ENCODE measurements at regions of chr1 and their contacts with region 1.

Region 1: DNA sequence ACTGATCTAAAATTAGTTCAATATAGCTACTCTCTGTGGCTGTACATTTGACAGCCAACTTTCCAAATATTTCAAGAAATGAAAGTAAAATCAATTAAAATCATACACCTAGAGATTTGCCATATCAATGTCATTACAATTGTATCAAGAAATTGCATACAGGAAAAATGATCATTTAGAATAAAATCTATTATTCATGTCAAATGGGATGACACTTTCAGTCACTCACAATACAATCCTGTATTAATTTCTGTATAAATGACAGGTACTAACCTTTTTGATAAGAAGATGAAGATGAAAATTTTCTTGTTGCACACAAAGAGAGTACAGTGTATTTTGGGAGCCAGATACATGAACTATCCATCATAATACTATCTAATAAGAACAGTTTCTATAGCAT is 1588.9 kb upstream of the PRMT6 start:
- DNase-seq: no peak
- ATAC-seq: no peak
- H3K4me3 Mint-ChIP-seq: no peak overlapping the region
- H3K27ac Mint-ChIP-seq: no peak overlapping the region
- H3K4me1 Mint-ChIP-seq: no peaks in the 10 kb centered on the region
- H3K27me3 Mint-ChIP-seq: no peaks in the 10 kb centered on the region

Region 2: GRCh38 chr1:105368446-105368845 is 99.1 kb before region 1 on chr1:
- CTCF ChIA-PET with region 1: no interaction called
- POLR2A ChIA-PET with region 1: no interaction called
- intact Hi-C with region 1: no loop called
- DNase-seq: no peak
- ATAC-seq: no peak
- H3K4me3 Mint-ChIP-seq: no peak overlapping the region
- H3K27ac Mint-ChIP-seq: no peak overlapping the region
- H3K4me1 Mint-ChIP-seq: no peaks in the 10 kb centered on the region
- H3K27me3 Mint-ChIP-seq: no peaks in the 10 kb centered on the region

Region 3: GRCh38 chr1:105485207-105485606 is 17.7 kb after region 1 on chr1:
- CTCF ChIA-PET with region 1: no interaction called
- POLR2A ChIA-PET with region 1: no interaction called
- intact Hi-C with region 1: loop called (anchors 1 kb)
- DNase-seq: no peak
- ATAC-seq: no peak
- H3K4me3 Mint-ChIP-seq: no peak overlapping the region
- H3K27ac Mint-ChIP-seq: no peak overlapping the region
- H3K4me1 Mint-ChIP-seq: no peaks in the 10 kb centered on the region
- H3K27me3 Mint-ChIP-seq: no peaks in the 10 kb centered on the region

Measured in activated CD4-positive, alpha-beta T cell treated with anti-CD3 and anti-CD28 coated beads for 36 hours (primary cell).